Lower leg skin (tissue), 4 donors: ENCODE measurements at regions of chr6 and their contacts with region 1.

Region 1: DNA sequence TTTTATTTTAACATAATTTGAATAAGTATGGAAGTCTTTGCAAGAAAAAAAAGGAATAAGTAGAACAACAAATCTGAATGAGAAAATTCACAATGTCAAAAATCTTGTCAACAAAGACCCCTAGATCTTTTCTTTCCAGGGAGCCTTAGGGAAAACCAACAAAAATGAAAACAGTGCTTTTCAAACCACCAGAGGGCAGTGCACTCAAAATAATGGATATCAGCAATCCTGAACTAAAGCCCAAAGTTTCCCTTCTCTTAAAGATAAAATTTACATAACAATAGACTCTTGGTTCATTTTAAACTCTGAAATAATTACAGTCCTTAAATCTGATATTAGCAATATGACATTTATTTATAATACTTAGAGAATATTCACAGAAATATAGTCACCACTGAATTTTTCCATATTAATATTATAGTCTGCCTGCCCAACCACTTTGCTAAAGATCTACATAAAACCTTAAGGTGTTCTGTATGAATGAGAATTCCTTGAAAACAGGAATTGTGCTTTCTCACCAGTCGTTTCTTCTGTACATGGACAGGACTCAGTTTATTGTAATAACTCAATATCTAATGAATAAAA is 105.3 kb upstream of the BMP5 start:
- DNase-seq: no peak
- H3K4me3 ChIP-seq: no peak overlapping the region
- CTCF ChIP-seq: no peak
- POLR2A ChIP-seq: no peak

Region 2: GRCh38 chr6:56292505-56293181 is 311.9 kb after region 1 on chr6:
- intact Hi-C with region 1: loop called (anchors 5 kb)
- DNase-seq: no peak
- H3K4me3 ChIP-seq: no peak overlapping the region
- CTCF ChIP-seq: peak in 1 of 3 donors; percentile 39
- POLR2A ChIP-seq: no peak

Region 3: GRCh38 chr6:56424542-56425083 is 443.9 kb after region 1 on chr6:
- intact Hi-C with region 1: no loop called
- DNase-seq: no peak
- H3K4me3 ChIP-seq: no peak overlapping the region
- CTCF ChIP-seq: no peak
- POLR2A ChIP-seq: no peak